AG04449 (cell line): ENCODE measurements at regions of chr9 and their contacts with region 1.

Region 1: GRCh38 chr9:69672596-69673310 is 582 bp upstream of the APBA1 start:
- DNase-seq: peak; percentile 33
- H3K4me3 ChIP-seq: peak overlapping the region; percentile 82
- CTCF ChIP-seq: peak; percentile 99

Region 2: GRCh38 chr9:69564557-69564956 is 108.2 kb before region 1 on chr9:
- CTCF ChIA-PET with region 1: no interaction called
- POLR2A ChIA-PET with region 1: no interaction called
- DNase-seq: no peak
- H3K4me3 ChIP-seq: no peak overlapping the region
- CTCF ChIP-seq: no peak

Region 3: DNA sequence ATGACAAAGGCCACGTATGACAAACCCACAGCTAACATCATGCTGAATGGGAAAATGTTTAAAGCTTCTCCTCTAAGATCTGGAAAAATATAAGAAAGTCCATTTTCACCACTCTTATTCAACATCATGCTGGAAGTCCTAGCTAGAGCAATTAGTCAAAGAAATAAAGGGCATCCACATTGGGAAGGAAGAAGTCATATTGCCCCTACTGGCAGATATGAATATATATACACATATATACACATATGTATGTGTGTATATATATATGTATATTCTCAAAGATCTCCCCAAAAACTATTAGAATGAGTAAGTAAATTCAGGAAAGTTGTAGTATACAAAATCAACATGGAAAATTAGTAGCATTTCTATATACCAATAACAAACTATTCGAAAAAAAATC is 17.7 kb before region 1 on chr9:
- CTCF ChIA-PET with region 1: interaction called, 33 read pairs
- POLR2A ChIA-PET with region 1: no interaction called
- DNase-seq: no peak
- H3K4me3 ChIP-seq: no peak overlapping the region
- CTCF ChIP-seq: no peak

Region 4: DNA sequence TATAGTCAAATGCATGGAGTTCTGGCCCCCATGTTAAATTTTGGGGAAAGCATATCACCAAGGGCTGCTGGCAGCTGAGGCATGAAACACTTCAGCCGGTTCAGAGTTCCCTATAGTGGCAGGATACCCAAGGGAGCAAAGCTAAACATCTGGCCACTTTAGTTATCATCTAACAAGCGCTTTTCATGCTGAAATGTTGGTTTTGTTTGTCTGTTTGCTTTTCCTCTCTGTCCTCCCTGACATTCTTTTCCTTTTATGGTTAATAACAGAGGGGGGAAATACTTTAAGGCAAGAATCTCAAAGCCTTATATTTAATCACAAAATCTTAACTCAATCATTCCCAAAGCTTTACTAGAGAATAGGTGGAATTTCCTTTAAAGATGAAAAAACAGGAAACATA is 12.4 kb before region 1 on chr9:
- CTCF ChIA-PET with region 1: interaction called, 33 read pairs
- POLR2A ChIA-PET with region 1: interaction called, 3 read pairs
- DNase-seq: no peak
- H3K4me3 ChIP-seq: no peak overlapping the region
- CTCF ChIP-seq: no peak

Region 5: DNA sequence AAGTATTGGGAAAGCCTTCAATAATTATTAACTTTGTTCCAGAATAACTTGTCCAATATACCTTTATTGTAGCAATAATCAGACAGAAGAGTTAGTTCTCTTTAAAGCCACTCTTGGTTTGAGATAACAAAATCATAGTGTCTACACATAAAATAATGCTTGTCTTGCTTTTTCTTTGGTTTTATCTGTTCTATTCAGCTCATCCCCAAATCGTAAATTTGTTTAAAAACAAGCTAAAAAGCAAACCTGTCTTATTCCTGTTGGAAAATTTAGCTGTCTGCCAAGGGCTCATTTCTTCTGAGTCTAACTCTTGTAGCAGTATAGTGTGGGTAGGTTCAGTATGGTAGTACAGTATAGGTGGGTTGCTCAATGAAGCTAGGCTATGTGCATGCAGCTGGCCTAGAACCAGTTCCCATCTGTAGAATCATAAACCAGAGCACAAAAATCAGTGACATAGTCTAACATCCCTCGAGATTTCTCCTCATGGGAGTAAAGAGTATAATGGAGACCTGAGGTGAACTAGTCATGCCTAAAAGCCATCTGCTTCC is 17.3 kb after region 1 on chr9:
- CTCF ChIA-PET with region 1: interaction called, 12 read pairs
- POLR2A ChIA-PET with region 1: no interaction called
- DNase-seq: no peak
- H3K4me3 ChIP-seq: no peak overlapping the region
- CTCF ChIP-seq: no peak

Region 6: GRCh38 chr9:69996967-69997366 is 324.2 kb after region 1 on chr9:
- CTCF ChIA-PET with region 1: no interaction called
- POLR2A ChIA-PET with region 1: no interaction called
- DNase-seq: no peak
- H3K4me3 ChIP-seq: no peak overlapping the region
- CTCF ChIP-seq: no peak